ENCODE measurements at regions of chr3 and their contacts with region 1.

Region 1: DNA sequence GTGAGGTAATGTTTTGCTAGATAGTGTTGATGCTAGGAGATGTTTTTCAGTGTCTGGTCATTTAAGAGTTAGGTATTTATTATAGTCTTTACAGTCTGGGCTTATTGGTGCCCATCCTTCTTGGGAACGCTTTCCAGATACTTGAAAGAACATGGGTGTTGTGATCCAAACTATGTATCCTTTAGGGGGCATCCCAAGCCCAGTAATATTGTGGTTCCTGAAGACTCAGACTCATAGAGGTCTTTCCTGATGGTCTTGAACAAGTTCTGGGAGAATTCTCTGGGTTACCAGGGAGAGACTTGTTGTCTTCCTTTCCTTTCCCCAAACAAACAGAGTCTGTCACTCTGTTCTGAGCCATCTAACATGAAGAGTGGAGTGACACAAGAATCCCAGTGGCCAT is 99.7 kb upstream of the LRRC3B start:
- DNase-seq: no peak
- ATAC-seq: no peak
- H3K4me3 ChIP-seq: no peak overlapping the region
- H3K27ac ChIP-seq: no peak overlapping the region
- H3K4me1 ChIP-seq: no peaks in the 10 kb centered on the region
- H3K27me3 ChIP-seq: no peaks in the 10 kb centered on the region
- CTCF ChIP-seq: no peak

Region 2: DNA sequence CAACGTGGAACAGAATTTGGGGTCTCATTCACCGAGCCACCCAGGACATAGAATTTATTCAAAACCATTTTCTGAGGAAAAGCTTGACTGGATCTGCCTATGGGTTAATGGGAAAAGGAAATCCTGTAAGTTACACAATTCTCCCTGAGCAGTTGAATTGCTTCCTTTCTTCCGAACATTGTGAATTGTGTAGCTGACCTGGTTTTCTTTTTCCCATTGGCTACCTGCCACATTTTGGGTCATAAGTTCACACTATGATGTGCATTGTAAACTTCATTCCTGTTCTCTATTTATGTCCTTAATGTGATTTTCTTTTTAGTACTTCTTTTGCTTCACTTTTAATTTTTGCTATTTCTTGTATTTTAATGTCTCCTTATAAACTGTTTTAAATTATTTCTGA is 286.4 kb before region 1 on chr3:
- CTCF ChIA-PET with region 1: no interaction called
- POLR2A ChIA-PET with region 1: no interaction called
- in situ Hi-C with region 1: no loop called
- intact Hi-C with region 1: no loop called
- DNase-seq: no peak
- ATAC-seq: no peak
- H3K4me3 ChIP-seq: no peak overlapping the region
- H3K27ac ChIP-seq: no peak overlapping the region
- H3K4me1 ChIP-seq: no peaks in the 10 kb centered on the region
- H3K27me3 ChIP-seq: no peaks in the 10 kb centered on the region
- CTCF ChIP-seq: no peak

Region 3: DNA sequence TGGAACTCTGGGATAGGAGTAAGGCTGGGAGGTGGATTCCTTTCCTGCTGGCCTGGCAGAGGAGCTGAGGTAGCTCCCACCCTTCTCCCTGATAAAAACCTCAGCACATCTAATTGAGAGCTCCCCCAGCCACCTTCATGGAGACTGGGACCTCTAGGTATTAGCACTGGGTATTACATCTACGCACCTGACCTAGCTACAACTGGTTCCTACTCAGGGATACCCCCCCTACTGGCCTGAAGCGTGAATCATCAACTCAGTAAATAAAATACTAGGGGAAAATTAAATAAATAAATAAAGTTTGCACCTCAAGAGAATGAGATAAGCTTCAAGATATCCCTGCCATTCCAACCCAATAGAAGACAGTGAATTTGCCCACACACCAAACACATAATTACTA is 705.9 kb after region 1 on chr3:
- CTCF ChIA-PET with region 1: no interaction called
- POLR2A ChIA-PET with region 1: no interaction called
- in situ Hi-C with region 1: no loop called
- intact Hi-C with region 1: loop called (anchors 10 kb)
- DNase-seq: no peak
- ATAC-seq: no peak
- H3K4me3 ChIP-seq: no peak overlapping the region
- H3K27ac ChIP-seq: no peak overlapping the region
- H3K4me1 ChIP-seq: no peaks in the 10 kb centered on the region
- H3K27me3 ChIP-seq: no peaks in the 10 kb centered on the region
- CTCF ChIP-seq: peak; percentile 24; the same call in 1 of the 2 replicates